Head of caudate nucleus (tissue), 42 donors: ENCODE measurements at regions of chr1 and their contacts with region 1.

Region 1: DNA sequence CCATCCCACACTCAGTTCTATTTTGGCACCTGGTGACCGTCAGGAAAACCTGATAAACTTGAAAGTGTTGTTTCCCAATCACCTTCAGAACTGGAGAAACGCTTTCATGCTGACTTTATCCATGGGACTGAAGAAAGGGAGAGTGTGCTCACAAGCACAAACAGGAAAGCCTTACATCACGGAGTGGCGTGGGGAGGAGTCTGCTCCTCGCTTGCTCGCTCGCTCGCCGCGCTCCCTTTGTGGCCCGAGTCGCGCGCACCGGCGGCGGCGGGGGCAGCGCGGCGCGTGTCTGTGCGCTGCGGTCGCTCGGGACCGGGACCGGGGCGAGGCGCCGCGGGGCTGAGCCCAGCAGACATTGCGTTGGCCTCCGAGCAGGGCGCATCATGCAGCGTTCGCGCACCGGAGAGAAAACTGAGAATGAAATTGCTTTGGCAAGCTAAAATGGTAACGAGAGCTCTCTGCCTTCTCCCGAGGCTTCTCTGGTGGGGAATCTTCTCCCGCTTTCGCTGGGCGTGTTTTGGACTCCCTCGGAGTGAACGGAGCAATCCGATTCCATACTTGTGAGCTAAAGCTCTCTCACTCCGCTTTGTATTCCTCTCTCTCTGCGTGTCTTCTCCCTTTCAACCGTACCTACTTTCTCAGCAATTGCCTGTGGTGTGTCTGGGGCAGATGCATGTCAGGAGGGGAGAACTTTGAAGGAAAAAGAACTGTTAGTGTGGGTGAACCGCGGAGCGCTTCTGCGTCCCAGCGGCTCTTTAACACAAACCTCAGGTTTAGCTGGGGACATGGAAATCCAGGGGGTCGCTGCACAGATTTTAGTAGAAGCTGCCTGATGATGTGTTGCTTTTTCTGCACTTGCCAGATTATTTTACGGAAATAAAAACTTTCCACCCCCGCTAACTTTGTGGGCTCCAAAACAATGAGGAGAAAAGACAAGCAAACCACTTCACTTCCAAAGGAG is at the start of gene RGL1:
- DNase-seq: peak; percentile 51 to 91 (median 80)

Region 2: DNA sequence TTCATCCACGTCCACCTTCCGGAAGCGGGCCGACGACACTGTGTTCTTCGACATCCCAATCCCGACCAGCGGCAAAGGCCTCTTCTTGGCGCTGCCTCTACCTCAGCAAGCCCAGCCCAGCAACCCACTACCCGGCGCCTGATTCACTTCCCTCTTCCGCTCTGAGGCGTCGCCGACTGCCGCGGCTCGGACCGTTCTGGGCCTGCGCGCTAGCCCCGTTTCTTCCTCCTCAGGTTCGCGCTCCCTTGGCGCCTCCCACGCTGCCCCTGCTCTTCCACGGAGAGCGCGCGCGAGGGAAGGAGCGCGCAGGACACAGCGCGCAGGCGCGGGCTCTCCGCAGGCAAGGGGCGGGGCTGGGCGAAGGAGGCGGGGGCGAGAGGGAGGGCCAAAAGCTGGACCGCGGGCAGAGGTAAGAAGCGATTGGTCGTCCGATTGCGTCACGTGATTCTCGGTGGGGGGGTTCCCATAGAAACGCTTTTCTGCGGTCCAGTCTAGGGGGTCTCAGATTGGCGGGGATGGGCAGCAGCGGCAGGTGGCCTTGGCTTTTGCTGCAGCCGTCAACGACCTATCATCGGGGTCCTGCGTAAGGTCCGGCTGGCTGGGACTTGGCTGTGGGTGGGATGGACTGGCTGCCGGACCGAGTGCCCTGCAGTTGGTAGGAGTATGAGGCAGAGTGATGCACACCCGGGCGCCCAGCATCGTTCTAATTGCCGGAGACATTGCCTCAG is 169.4 kb before region 1 on chr1 and contains the start of gene ARPC5:
- intact Hi-C with region 1: loop called (anchors 10 kb)
- DNase-seq: peak; percentile 93 to 99 (median 98)

Region 3: DNA sequence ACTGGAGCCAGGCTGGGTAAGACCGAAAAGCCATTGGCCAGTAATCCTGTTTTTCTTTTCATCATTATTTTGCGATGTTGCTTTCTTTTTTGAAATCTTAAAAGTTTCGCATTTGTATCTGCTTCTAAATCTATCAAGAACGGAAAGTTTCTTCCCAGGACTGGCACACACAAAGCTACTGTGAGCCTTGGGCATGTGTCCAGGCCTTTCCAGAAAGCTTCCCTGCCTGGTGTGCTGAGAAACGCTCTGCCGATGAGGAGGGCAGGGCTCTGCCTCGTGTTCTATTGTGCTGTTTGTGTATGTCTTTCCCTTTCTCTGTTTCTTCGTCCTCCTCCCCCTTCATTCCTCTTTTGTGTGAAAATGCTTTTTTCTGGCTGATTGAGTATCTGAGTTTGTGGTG is 72.2 kb after region 1 on chr1:
- intact Hi-C with region 1: loop called (anchors 5 kb)
- DNase-seq: peak; percentile 33 to 88 (median 68)

Region 4: GRCh38 chr1:183915625-183916510 is 110.7 kb after region 1 on chr1:
- intact Hi-C with region 1: loop called (anchors 10 kb)
- DNase-seq: peak in 41 of 42 donors; percentile 48 to 94 (median 81)